PC-3 (cell line): ENCODE measurements at regions of chr11 and their contacts with region 1.

Region 1: GRCh38 chr11:121634889-121635288 is 182.1 kb upstream of the SORL1-AS1 start:
- DNase-seq: peak; percentile 97
- ATAC-seq: peak; percentile 92
- H3K4me3 ChIP-seq: peak overlapping the region; percentile 22; the same call in 1 of the 2 replicates
- H3K27ac ChIP-seq: peak overlapping the region; percentile 77
- H3K4me1 ChIP-seq: peaks cover 39% of the 10 kb centered on the region
- H3K27me3 ChIP-seq: no peaks in the 10 kb centered on the region
- CTCF ChIP-seq: no peak

Region 2: DNA sequence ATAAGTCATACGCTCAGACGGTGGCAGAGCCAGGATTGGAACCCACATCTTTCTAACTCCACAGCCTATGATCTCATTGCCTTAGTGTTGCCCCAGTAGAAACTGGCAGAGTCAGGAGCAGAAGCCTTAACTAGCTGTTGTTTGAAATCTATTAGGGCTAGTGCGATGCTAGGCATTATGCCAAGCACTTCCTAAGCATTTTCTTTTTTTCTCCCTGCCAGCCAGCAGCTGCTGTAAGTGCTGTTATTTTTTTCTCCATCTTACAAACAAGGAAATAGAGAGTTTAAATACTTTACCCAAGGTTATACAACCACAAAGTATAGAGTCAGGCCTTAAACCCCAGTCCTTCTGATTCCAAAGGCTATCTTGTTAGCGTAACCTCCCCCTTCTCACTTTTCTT is 21.2 kb before region 1 on chr11:
- CTCF ChIA-PET with region 1: no interaction called
- POLR2A ChIA-PET with region 1: no interaction called
- intact Hi-C with region 1: loop called (anchors 1 kb)
- DNase-seq: no peak
- ATAC-seq: peak; percentile 5; the same call in 1 of the 2 replicates
- H3K4me3 ChIP-seq: no peak overlapping the region
- H3K27ac ChIP-seq: no peak overlapping the region
- H3K4me1 ChIP-seq: peaks cover 27% of the 10 kb centered on the region
- H3K27me3 ChIP-seq: no peaks in the 10 kb centered on the region
- CTCF ChIP-seq: no peak